ENCODE measurements at regions of chr15 and their contacts with region 1.

Region 1: GRCh38 chr15:31934821-31935220 is 95.5 kb upstream of the CHRNA7 start:
- DNase-seq: no peak
- H3K4me3 ChIP-seq: no peak overlapping the region
- H3K27ac ChIP-seq: no peak overlapping the region
- H3K4me1 ChIP-seq: no peaks in the 10 kb centered on the region
- H3K27me3 ChIP-seq: no peaks in the 10 kb centered on the region
- CTCF ChIP-seq: no peak
- POLR2A ChIP-seq: no peak

Region 2: GRCh38 chr15:31326156-31326732 is 608.6 kb before region 1 on chr15:
- intact Hi-C with region 1: no loop called
- DNase-seq: peak; percentile 97 to 99 (median 98)
- H3K4me3 ChIP-seq: peak overlapping the region; percentile 42 to 99 (median 70)
- H3K27ac ChIP-seq: peak overlapping the region; percentile 73 to 100 (median 98)
- H3K4me1 ChIP-seq: peaks cover 13 to 32% of the 10 kb centered on the region in 2 donors
- H3K27me3 ChIP-seq: no peaks in the 10 kb centered on the region
- CTCF ChIP-seq: no peak
- POLR2A ChIP-seq: peak; percentile 88 to 89

Region 3: GRCh38 chr15:32036971-32037370 is 102.2 kb after region 1 on chr15:
- intact Hi-C with region 1: loop called in 1 of 2 experiments (anchors 5 kb)
- DNase-seq: no peak
- H3K4me3 ChIP-seq: no peak overlapping the region
- H3K27ac ChIP-seq: no peak overlapping the region
- H3K4me1 ChIP-seq: no peaks in the 10 kb centered on the region
- H3K27me3 ChIP-seq: peaks cover 2% of the 10 kb centered on the region
- CTCF ChIP-seq: no peak
- POLR2A ChIP-seq: no peak

Measured in adrenal gland (tissue), 19 donors.